Transverse colon (tissue), 4 donors: ENCODE measurements at regions of chr3 and their contacts with region 1.

Region 1: DNA sequence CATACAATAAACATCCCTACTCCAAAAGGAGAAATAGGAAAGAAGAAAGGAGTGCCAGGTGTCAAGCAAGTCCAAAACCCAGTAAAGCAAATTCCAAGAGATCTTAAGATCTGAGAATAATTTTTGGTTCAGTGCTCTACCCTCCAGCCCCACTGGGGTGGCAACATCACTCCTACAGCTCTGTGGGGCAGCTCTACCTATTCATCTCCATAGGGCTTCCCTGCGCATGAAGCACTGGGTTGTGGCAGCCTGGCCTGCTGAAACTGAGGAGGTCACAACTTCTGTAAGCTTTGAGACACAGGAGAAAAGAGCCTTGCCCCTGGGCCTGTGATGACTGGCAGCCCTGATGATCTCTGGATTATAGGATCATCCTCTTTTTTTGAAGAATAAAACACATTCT is 378.2 kb upstream of the SOX14 start:
- DNase-seq: no peak
- H3K4me3 ChIP-seq: no peak overlapping the region
- H3K27ac ChIP-seq: no peak overlapping the region
- H3K4me1 ChIP-seq: no peaks in the 10 kb centered on the region
- H3K27me3 ChIP-seq: no peaks in the 10 kb centered on the region
- CTCF ChIP-seq: no peak
- EP300 ChIP-seq: no peak
- POLR2A ChIP-seq: no peak

Region 2: GRCh38 chr3:136844724-136845123 is 541.2 kb before region 1 on chr3:
- in situ Hi-C with region 1: no loop called
- intact Hi-C with region 1: no loop called
- DNase-seq: no peak
- H3K4me3 ChIP-seq: no peak overlapping the region
- H3K27ac ChIP-seq: no peak overlapping the region
- H3K4me1 ChIP-seq: no peaks in the 10 kb centered on the region
- H3K27me3 ChIP-seq: no peaks in the 10 kb centered on the region
- CTCF ChIP-seq: no peak
- EP300 ChIP-seq: no peak
- POLR2A ChIP-seq: no peak

Region 3: GRCh38 chr3:137647179-137647578 is 261.3 kb after region 1 on chr3:
- in situ Hi-C with region 1: no loop called
- intact Hi-C with region 1: no loop called
- DNase-seq: no peak
- H3K4me3 ChIP-seq: no peak overlapping the region
- H3K27ac ChIP-seq: no peak overlapping the region
- H3K4me1 ChIP-seq: no peaks in the 10 kb centered on the region
- H3K27me3 ChIP-seq: peaks cover 6% of the 10 kb centered on the region
- CTCF ChIP-seq: no peak
- EP300 ChIP-seq: no peak
- POLR2A ChIP-seq: no peak

Region 4: DNA sequence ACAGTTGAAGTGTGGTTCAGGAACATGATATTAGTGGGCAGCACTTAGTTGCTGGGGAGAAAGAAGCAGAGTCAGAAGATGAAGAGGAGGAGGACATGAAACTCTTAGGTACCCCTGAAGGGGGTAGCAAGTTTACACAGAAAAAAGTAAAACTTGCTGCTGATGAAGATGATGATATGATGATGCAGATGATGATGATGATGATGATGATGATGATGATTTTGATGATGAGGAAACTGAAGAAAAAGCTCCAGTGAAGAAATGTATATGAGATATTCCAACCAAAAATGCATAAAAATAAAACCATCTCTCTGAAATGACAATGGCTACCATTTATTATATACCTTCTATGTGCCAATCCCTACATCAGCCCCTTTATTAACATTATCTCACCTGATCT is 338.3 kb after region 1 on chr3:
- in situ Hi-C with region 1: no loop called
- intact Hi-C with region 1: no loop called
- DNase-seq: no peak
- H3K4me3 ChIP-seq: no peak overlapping the region
- H3K27ac ChIP-seq: no peak overlapping the region
- H3K4me1 ChIP-seq: no peaks in the 10 kb centered on the region
- H3K27me3 ChIP-seq: no peaks in the 10 kb centered on the region
- CTCF ChIP-seq: no peak
- EP300 ChIP-seq: no peak
- POLR2A ChIP-seq: no peak

Region 5: GRCh38 chr3:138985932-138986331 is 1600.0 kb after region 1 on chr3:
- in situ Hi-C with region 1: no loop called
- intact Hi-C with region 1: loop called (anchors 5 kb)
- DNase-seq: no peak
- H3K4me3 ChIP-seq: no peak overlapping the region
- H3K27ac ChIP-seq: no peak overlapping the region
- H3K4me1 ChIP-seq: no peaks in the 10 kb centered on the region
- H3K27me3 ChIP-seq: no peaks in the 10 kb centered on the region
- CTCF ChIP-seq: no peak
- EP300 ChIP-seq: no peak
- POLR2A ChIP-seq: no peak